HEK293 (cell line): ENCODE measurements at regions of chr1 and their contacts with region 1.

Region 1: DNA sequence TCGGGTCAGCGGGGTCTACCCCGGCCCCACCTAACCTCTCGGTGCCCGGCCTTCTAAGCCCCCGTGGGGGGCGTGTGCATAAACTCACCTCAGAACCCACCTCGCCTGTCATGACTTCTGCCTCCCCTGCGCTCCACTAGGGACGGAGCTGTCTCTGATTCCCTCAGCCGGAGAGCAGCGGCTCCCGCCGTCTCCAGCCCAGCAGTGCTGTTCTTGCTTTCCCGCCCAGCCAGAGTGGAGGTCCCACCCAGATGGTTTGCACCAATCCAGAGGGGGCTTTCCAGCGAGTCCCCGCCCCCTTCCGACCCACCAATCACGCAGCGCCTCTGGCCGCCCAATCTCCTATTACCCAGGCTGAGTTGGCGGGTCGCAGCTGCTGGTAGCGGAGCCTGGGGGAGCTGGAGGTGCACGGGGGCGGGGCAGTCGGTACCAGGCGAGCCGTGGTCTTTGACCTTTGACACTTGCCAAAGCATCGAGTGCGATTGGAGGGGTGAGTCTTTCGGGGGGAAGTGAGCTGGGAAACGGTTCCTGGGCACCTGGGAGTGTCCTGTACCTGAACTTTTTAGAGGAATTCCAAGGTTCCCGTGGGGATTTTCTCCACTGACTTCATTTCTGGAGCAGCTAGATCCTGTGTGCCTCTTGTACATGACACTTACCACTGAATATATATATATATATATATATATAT is at the start of gene CLSPN:
- H3K4me3 ChIP-seq: peak within 1 kb of the TSS; percentile 77
- H3K27ac ChIP-seq: peak within 1 kb of the TSS; percentile 97
- H3K4me1 ChIP-seq: no peaks in the 10 kb centered on the region
- CTCF ChIP-seq: no peak

Region 2: DNA sequence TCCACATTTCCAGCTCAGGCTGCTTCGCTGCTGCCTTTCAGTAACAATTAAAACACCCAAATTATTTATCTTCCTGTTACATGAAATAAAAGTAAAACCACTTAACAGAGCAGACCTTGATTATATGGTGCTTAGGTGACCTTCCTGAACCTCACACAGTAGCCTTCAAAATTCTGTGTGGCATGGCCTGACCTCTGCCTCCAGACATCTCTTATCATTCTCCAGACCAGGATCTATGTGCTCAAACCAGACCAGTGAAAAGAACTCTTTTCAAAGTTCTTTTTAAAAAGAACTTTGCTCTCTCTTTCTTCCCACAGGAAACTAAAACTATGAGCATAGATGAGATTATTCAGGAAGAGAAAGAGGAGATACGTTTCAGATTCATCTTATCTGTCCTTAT is 250.5 kb before region 1 on chr1:
- CTCF ChIA-PET with region 1: no interaction called
- POLR2A ChIA-PET with region 1: no interaction called
- H3K4me3 ChIP-seq: no peak overlapping the region
- H3K27ac ChIP-seq: no peak overlapping the region
- H3K4me1 ChIP-seq: no peaks in the 10 kb centered on the region
- CTCF ChIP-seq: no peak

Region 3: DNA sequence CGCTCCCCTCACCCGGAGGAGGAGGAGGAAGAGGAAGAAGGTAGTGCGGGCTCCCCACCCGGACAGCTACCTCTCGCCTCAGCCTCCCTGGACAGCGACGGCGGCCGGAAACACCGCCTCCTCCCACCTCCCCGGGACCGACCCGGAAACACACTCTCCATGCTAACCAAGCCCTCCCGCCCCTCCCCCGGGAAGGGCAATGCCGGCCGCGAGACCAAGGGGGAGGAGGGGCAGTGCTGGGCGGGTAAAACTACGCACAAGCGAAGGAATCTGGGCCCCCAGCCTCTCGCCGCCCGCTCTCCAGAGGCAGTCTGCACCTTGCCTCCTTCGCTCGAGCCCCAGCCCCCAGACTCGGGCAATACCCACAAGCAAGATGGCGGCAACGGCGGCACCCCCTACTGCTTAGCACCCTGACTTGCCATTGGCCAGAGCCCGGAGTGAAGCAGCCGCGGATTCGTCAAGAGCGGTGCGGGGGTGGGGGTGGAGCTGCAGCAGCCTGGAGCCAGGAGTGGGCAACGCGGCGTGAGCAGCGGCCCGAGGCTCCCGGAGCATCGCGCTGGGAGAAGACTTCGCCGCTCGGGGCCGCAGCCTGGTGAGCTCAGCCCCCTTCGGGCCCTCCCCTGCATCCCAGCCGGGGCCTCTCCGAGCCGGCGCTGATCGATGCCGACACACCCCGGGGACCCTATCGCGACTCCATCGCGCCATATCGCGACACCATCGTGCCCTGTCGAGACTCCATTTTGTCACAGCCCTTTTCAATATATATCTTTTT is 212.4 kb before region 1 on chr1 and contains the starts of genes KIAA0319L and NCDN:
- CTCF ChIA-PET with region 1: interaction called, 3 read pairs
- POLR2A ChIA-PET with region 1: interaction called, 22 read pairs
- H3K4me3 ChIP-seq: peak within 1 kb of the TSS; percentile 95
- H3K27ac ChIP-seq: peak within 1 kb of the TSS; percentile 96
- H3K4me1 ChIP-seq: peaks cover 27% of the 10 kb centered on the region
- CTCF ChIP-seq: no peak

Region 4: GRCh38 chr1:35577071-35577998 is 192.6 kb before region 1 on chr1:
- CTCF ChIA-PET with region 1: interaction called, 4 read pairs
- POLR2A ChIA-PET with region 1: interaction called, 10 read pairs
- H3K4me3 ChIP-seq: no peak overlapping the region
- H3K27ac ChIP-seq: no peak overlapping the region
- H3K4me1 ChIP-seq: no peaks in the 10 kb centered on the region
- CTCF ChIP-seq: no peak

Region 5: DNA sequence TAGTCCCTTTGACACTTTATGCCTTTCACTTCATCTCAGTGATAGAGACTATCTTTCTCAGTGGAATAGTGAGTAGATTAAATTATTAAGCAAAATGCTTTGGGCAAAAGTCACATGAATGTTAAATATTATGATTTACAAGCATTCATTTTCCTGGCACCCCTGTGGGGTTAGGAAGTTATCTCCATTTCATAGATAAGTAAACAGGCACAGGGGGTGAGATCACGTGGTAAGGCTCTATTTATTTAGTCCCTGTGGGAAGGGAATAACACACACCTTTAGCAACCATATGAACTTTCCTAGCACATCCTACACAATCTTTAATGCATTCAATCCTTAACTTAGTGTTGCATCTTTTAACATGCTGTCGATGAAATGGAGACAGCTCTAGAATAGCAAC is 140.9 kb before region 1 on chr1:
- CTCF ChIA-PET with region 1: no interaction called
- POLR2A ChIA-PET with region 1: no interaction called
- H3K4me3 ChIP-seq: no peak overlapping the region
- H3K27ac ChIP-seq: no peak overlapping the region
- H3K4me1 ChIP-seq: peaks cover 5% of the 10 kb centered on the region
- CTCF ChIP-seq: no peak

Region 6: DNA sequence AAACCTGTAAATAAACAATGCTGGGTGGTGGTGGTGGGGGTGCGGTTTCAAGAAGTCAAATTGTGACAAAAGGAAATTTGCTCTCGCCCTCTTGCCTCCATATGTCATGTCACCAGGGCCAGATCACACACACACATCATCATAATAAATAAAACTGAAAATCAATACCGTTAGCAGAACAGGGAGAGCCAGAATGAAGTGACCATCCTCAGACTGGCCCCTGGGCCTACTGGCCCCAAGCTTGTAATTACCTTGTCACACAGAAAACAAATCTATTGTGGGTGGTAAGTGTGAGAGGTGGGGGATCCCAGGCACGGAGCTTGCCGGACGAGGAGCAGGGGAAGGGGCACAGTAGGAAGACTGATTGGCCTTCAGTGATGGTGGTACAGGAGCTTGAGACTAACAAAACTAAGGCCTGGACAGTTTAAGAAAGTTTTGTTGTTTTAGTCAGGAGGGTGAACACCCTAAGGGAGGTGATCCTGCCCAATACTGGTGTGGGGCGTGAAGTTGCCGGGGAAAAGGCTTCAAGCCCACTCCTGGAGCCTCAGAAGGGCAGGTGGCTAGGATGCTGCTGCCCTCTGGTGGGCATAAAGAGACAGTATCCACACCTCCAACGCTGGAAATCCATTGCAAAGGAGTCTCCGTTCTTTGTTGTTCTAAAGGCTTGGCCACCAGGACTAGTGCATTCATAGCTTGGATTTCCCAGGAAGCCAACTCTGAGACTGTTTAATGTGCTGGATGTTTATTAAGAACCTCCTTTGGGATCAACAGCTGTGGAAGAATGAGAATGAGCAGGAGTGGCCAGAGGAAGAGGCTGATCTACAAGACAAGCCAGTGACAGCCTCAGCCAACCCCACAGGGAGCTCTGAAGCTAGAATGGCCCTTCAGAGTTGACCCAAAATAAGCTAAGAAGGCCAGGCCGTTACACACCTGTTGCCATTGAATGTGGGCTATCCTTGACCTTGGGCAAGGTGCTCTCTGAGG is 43.2 kb before region 1 on chr1:
- CTCF ChIA-PET with region 1: interaction called, 17 read pairs
- POLR2A ChIA-PET with region 1: interaction called, 9 read pairs
- H3K4me3 ChIP-seq: no peak overlapping the region
- H3K27ac ChIP-seq: 0 out of 2 replicates have a peak overlapping the region, but pooled peaks have one; percentile 11
- H3K4me1 ChIP-seq: no peaks in the 10 kb centered on the region
- CTCF ChIP-seq: peak; percentile 77

Region 7: GRCh38 chr1:35747938-35748702 is 21.8 kb before region 1 on chr1:
- CTCF ChIA-PET with region 1: interaction called, 3 read pairs
- POLR2A ChIA-PET with region 1: interaction called, 12 read pairs
- H3K4me3 ChIP-seq: no peak overlapping the region
- H3K27ac ChIP-seq: no peak overlapping the region
- H3K4me1 ChIP-seq: no peaks in the 10 kb centered on the region
- CTCF ChIP-seq: no peak

Region 8: DNA sequence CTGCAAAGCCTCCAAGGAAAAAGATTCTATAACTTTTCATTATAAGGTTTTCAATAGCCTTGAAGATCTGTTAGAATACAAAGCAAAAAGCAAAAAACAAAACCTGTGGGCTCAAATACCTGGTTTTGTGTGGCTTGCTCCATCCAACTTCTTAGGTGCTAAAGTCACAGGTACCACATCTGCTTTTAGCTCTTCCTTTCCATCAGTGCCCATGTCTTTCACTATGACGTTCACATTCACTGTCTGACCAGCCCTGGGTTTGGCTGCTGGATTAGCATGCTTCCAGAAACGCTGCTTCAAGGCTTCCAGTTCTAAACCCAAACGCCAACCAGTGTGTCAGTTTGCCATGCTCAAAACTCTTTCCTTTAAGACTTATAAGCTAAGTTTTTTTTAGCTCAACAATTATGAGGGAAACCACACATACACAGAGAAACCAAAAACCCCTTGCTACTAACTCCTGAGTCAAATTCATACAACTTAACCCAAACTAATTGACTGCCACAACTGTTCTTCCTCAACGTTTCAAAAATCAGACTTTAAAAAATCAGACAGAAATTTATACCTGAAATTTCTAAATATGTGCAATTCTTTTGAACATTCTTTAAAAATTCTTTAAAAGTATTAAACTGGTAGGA is 16.2 kb before region 1 on chr1:
- CTCF ChIA-PET with region 1: interaction called, 6 read pairs
- POLR2A ChIA-PET with region 1: interaction called, 19 read pairs
- H3K4me3 ChIP-seq: no peak overlapping the region
- H3K27ac ChIP-seq: no peak overlapping the region
- H3K4me1 ChIP-seq: no peaks in the 10 kb centered on the region
- CTCF ChIP-seq: no peak

Region 9: GRCh38 chr1:35783055-35783583 is 13.2 kb after region 1 on chr1:
- CTCF ChIA-PET with region 1: interaction called, 9 read pairs
- POLR2A ChIA-PET with region 1: interaction called, 13 read pairs
- H3K4me3 ChIP-seq: no peak overlapping the region
- H3K27ac ChIP-seq: no peak overlapping the region
- H3K4me1 ChIP-seq: no peaks in the 10 kb centered on the region
- CTCF ChIP-seq: no peak

Region 10: DNA sequence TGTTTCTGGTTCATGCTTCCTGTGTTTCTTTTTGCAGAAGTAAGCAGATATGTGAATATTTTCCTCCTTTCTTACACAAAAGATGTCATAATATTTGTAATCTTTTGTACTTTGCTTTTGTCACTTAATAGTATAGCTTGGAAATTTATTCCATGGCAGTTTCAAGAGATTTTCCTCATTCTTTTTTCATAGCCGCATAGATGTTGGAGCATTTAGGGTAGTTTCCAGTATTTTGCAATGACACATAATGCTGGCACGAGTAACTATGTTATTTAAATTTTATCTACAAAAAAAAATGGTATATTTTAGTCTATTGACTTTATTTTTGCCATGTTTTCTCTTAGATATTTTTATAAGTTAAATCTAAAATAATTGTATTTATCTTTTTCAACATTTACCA is 201.7 kb after region 1 on chr1:
- CTCF ChIA-PET with region 1: no interaction called
- POLR2A ChIA-PET with region 1: no interaction called
- H3K4me3 ChIP-seq: no peak overlapping the region
- H3K27ac ChIP-seq: no peak overlapping the region
- H3K4me1 ChIP-seq: no peaks in the 10 kb centered on the region
- CTCF ChIP-seq: no peak

Region 11: GRCh38 chr1:36008546-36009197 is 238.8 kb after region 1 on chr1:
- CTCF ChIA-PET with region 1: no interaction called
- POLR2A ChIA-PET with region 1: no interaction called
- H3K4me3 ChIP-seq: no peak overlapping the region
- H3K27ac ChIP-seq: no peak overlapping the region
- H3K4me1 ChIP-seq: no peaks in the 10 kb centered on the region
- CTCF ChIP-seq: no peak